ENCODE measurements at regions of chr1 and their contacts with region 1.

Region 1: DNA sequence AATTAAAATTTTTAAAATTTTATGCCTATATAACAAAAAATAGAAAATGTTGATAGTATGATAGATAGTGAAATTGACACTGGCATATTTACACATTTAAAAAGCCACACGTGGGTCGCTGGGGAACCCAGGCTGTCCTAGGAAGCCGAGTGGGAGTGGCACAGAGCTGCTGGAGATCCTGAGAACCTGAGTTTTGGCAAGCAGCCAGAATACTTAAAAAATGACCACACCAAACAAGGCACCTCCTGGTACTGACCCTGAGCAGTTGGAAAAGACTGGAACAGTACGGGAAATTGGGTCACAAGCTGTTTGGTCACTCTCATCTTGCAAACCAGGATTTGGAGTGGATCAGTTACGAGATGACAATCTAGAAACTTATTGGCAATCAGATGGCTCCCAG is 111.5 kb downstream of the ZFYVE9 start:
- DNase-seq: no peak
- H3K4me3 ChIP-seq: no peak overlapping the region
- H3K27ac ChIP-seq: no peak overlapping the region
- H3K4me1 ChIP-seq: no peaks in the 10 kb centered on the region
- H3K27me3 ChIP-seq: no peaks in the 10 kb centered on the region
- CTCF ChIP-seq: no peak

Region 2: GRCh38 chr1:53826367-53826766 is 1573.0 kb after region 1 on chr1:
- CTCF ChIA-PET with region 1: no interaction called
- POLR2A ChIA-PET with region 1: interaction called, 11 read pairs
- intact Hi-C with region 1: no loop called
- DNase-seq: no peak
- H3K4me3 ChIP-seq: no peak overlapping the region
- H3K27ac ChIP-seq: no peak overlapping the region
- H3K4me1 ChIP-seq: no peaks in the 10 kb centered on the region
- H3K27me3 ChIP-seq: no peaks in the 10 kb centered on the region
- CTCF ChIP-seq: no peak; the same call in 1 of the 2 replicates

Measured in PC-9 (cell line).